ENCODE measurements at regions of chr3 and their contacts with region 1.

Region 1: GRCh38 chr3:62558549-62559112 is 185.3 kb upstream of the FEZF2 start:
- DNase-seq: no peak
- H3K4me3 ChIP-seq: no peak overlapping the region
- H3K27ac ChIP-seq: no peak overlapping the region
- H3K4me1 ChIP-seq: peaks cover 0 to 21% (median 8%) of the 10 kb centered on the region in 4 donors
- H3K27me3 ChIP-seq: no peaks in the 10 kb centered on the region
- CTCF ChIP-seq: peak in 1 of 2 experiments; percentile 17

Region 2: GRCh38 chr3:62277450-62277849 is 281.2 kb before region 1 on chr3:
- intact Hi-C with region 1: no loop called
- DNase-seq: no peak
- H3K4me3 ChIP-seq: no peak overlapping the region
- H3K27ac ChIP-seq: no peak overlapping the region
- H3K4me1 ChIP-seq: no peaks in the 10 kb centered on the region
- H3K27me3 ChIP-seq: no peaks in the 10 kb centered on the region
- CTCF ChIP-seq: no peak

Region 3: GRCh38 chr3:62343755-62344154 is 214.9 kb before region 1 on chr3:
- intact Hi-C with region 1: loop called (anchors 10 kb)
- DNase-seq: no peak
- H3K4me3 ChIP-seq: no peak overlapping the region
- H3K27ac ChIP-seq: no peak overlapping the region
- H3K4me1 ChIP-seq: no peaks in the 10 kb centered on the region
- H3K27me3 ChIP-seq: no peaks in the 10 kb centered on the region
- CTCF ChIP-seq: no peak

Region 4: GRCh38 chr3:62636235-62636826 is 77.7 kb after region 1 on chr3:
- intact Hi-C with region 1: no loop called
- DNase-seq: no peak
- H3K4me3 ChIP-seq: no peak overlapping the region
- H3K27ac ChIP-seq: no peak overlapping the region
- H3K4me1 ChIP-seq: no peaks in the 10 kb centered on the region
- H3K27me3 ChIP-seq: peaks cover 0 to 9% of the 10 kb centered on the region in 2 donors
- CTCF ChIP-seq: no peak

Region 5: DNA sequence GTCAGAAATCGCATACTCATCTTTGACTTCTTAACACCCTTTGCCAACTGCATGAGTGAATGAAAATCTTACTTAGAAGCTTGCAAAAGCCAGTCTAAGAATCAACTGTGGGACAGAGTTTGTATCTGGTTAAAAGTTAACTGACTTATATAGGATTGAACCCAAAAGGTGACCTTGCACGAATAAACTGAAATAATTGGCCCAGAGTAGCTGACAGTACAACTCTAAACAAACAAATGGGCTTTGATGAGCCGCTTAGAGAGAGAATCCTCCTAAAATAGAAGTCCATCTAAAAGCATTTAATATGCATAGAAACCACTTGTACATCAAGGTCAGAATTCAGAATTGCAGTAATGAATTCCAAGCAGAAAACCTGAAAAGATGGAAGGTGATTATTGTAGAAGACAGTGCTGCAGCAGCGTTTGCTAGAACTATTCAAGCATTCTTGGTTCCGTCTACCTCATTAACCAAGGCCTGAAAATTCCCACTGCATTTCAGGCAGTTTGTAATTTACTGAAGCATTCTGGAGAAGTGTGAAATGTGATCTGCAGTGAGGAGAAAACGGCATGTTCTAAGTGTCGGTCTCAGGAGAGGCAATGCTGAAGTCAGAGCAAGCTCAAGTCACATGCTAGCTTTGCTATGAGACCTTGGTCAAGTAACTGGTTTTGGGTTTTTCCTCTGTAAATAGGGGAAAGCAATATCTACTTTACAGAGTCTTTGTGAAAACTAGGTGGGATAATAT is 212.9 kb after region 1 on chr3:
- intact Hi-C with region 1: no loop called
- DNase-seq: no peak
- H3K4me3 ChIP-seq: no peak overlapping the region
- H3K27ac ChIP-seq: no peak overlapping the region
- H3K4me1 ChIP-seq: no peaks in the 10 kb centered on the region
- H3K27me3 ChIP-seq: no peaks in the 10 kb centered on the region
- CTCF ChIP-seq: no peak